Activated CD4-positive, alpha-beta memory T cell treated with anti-CD3 and anti-CD28 coated beads for 36 hours (primary cell): ENCODE measurements at regions of chr1 and their contacts with region 1.

Region 1: GRCh38 chr1:151494741-151495281 is 16.4 kb upstream of the CGN start:
- DNase-seq: no peak
- H3K4me3 Mint-ChIP-seq: no peak overlapping the region
- H3K27ac Mint-ChIP-seq: peak overlapping the region; percentile 9
- H3K4me1 Mint-ChIP-seq: peaks cover 11% of the 10 kb centered on the region
- H3K27me3 Mint-ChIP-seq: peaks cover 3% of the 10 kb centered on the region

Region 2: DNA sequence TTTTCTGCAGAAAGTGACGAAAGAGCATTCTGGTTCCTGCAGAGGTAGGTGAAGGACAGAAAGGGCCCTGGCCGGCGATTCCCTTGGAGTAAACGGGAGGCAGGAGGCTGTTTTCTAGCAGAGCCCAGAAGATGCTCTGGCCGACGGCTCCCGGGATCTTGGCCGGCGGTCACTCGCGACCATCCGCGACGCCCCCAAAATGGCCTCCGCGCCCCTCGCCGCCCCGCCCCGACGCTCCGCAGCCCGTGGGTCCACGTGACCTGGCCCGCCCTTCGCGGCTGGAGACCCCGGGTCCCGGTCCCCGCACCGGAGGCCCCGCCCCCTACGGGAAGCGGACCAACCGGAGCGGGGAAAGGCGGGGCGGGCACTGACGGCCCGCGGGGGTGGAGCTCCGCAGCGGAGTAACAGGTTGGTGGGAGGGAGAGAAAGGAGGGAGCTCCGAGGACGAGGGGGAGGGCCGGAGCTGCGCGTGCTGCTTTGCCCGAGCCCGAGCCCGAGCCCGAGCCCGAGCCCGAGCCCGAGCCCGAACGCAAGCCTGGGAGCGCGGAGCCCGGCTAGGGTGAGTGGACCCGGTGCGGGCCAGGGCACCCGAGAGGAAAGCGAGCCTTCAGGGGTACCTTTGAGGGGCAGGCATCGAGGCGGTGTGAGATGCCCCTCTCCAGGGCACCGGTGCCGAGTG is 16.3 kb after region 1 on chr1 and contains the start of gene CGN:
- CTCF ChIA-PET with region 1: no interaction called
- POLR2A ChIA-PET with region 1: interaction called, 3 read pairs
- intact Hi-C with region 1: loop called (anchors 2 kb)
- DNase-seq: peak; percentile 90
- H3K4me3 Mint-ChIP-seq: peak within 1 kb of the TSS; percentile 80
- H3K27ac Mint-ChIP-seq: no peak within 1 kb of the TSS
- H3K4me1 Mint-ChIP-seq: peaks cover 20% of the 10 kb centered on the region
- H3K27me3 Mint-ChIP-seq: no peaks in the 10 kb centered on the region
- total RNA-seq, gene CGN: 1.3 to 1.4 TPM